ENCODE measurements at regions of chr7 and their contacts with region 1.

Region 1: GRCh38 chr7:55255496-55256435 is 109.4 kb upstream of the LANCL2 start:
- DNase-seq: peak; percentile 96
- H3K4me3 Mint-ChIP-seq: peak overlapping the region; percentile 88
- H3K27ac Mint-ChIP-seq: peak overlapping the region; percentile 50
- H3K4me1 Mint-ChIP-seq: peaks cover 22% of the 10 kb centered on the region
- H3K27me3 Mint-ChIP-seq: peaks cover 48% of the 10 kb centered on the region
- CTCF ChIP-seq: peak; percentile 94

Region 2: DNA sequence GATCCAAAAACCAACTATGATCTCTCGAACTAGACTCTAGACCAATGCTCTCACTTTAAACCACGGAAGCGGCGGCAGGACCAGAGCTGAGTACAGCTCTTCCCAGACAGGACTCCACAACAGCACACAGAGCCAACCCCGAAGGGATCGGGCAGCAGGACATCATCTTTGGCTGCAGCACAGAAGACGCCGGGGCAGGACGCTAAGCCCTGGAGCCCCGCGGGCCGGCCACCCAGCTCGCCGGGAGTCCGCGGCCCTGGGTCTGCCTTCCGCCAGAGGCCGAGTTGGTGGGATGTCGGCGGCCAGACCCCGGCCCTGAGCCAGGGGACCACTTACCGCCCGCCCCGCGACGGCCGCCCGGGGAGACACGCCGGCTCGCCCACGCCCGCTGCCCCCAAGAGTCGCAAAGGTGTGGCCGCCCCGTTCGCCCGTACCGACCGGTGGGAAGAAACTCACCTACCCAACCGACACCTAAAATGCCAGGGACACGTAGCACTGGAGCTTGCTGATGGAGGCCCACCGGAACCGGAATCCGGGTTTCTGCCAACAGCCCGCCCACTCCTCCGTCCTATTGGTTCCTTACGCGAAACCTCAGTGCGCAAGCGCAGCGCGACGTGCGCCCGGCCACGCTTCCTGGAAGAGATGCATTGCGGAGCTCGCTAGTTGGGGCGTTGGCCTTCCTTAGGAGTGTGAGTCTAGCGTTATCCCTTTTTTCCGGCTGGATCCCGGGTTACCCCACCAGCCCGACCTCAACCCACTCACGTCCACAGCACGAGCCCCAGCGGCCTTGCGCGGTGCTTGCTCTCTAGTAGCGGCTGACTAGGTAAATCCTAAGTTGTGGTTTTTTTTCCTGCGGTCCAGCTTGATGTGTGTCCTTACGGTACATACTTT is 496.8 kb before region 1 on chr7 and contains the start of gene SEC61G:
- CTCF ChIA-PET with region 1: interaction called, 19 read pairs
- intact Hi-C with region 1: no loop called
- DNase-seq: peak; percentile 99
- H3K4me3 Mint-ChIP-seq: peak within 1 kb of the TSS; percentile 99
- H3K27ac Mint-ChIP-seq: peak within 1 kb of the TSS; percentile 99
- H3K4me1 Mint-ChIP-seq: peaks cover 23% of the 10 kb centered on the region
- H3K27me3 Mint-ChIP-seq: peaks cover 8% of the 10 kb centered on the region
- CTCF ChIP-seq: no peak
- total RNA-seq, gene SEC61G: 198 and 202 TPM in 2 replicates

Region 3: DNA sequence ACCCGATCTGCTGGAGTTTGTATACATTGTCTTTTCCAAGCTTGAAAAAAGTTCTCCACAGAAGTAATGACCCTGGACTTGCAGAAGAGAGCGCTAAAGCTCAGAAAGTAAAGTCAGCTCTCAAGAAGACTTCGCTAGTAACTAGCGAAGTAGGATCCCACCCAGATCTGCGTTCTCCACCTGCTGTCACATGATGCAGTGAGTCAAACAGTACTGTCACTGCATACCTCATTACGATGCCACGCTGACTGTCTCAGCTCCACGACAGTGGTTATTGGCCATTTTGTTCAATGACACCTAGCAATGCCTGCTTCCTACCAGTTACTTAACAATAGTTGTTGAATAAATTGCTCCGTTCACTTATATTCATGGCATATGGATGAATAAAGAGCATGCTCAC is 467.1 kb before region 1 on chr7:
- CTCF ChIA-PET with region 1: interaction called, 48 read pairs
- intact Hi-C with region 1: loop called (anchors 1 kb)
- DNase-seq: peak; percentile 66
- H3K4me3 Mint-ChIP-seq: no peak overlapping the region
- H3K27ac Mint-ChIP-seq: peak overlapping the region; percentile 79
- H3K4me1 Mint-ChIP-seq: peaks cover 64% of the 10 kb centered on the region
- H3K27me3 Mint-ChIP-seq: no peaks in the 10 kb centered on the region
- CTCF ChIP-seq: peak; percentile 88

Region 4: GRCh38 chr7:54877683-54878082 is 378.1 kb before region 1 on chr7:
- CTCF ChIA-PET with region 1: interaction called, 19 read pairs
- intact Hi-C with region 1: loop called (anchors 1 kb)
- DNase-seq: peak; percentile 43
- H3K4me3 Mint-ChIP-seq: no peak overlapping the region
- H3K27ac Mint-ChIP-seq: peak overlapping the region; percentile 13
- H3K4me1 Mint-ChIP-seq: peaks cover 57% of the 10 kb centered on the region
- H3K27me3 Mint-ChIP-seq: no peaks in the 10 kb centered on the region
- CTCF ChIP-seq: no peak

Region 5: DNA sequence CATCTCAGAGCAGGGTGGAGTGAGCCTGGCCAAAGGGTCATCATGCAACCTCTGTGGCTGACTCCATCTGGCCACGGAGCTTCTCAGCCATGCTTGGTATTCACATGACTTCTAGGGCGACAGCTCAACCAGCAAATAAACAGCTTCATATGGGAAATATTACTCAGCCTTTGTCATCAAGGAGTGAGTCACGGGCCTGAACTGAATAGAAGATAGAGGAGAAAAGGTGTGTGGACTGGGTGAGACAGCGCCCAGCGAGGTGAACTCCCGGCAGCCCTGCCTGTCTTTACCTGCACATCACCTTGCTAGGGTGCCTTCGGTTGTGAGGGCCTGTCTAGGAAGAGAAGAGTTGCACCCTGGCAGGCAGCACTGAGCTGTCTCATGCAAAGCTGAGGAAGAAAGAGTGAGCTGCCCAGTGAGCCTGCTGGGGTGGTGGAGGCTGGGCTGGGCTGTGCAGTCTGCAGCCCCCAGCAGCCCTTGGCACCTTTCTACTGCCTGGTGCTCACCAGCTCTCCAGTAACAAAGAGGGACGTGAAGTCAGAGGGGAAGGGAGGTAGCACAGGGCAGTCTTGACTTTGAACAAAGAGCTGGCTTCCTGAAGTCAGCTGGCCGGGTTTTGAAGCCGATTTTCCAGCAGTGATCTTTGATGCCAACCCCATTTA is 122.7 kb before region 1 on chr7:
- CTCF ChIA-PET with region 1: interaction called, 13 read pairs
- intact Hi-C with region 1: loop called (anchors 5 kb)
- DNase-seq: peak; percentile 89
- H3K4me3 Mint-ChIP-seq: peak overlapping the region; percentile 39
- H3K27ac Mint-ChIP-seq: peak overlapping the region; percentile 95
- H3K4me1 Mint-ChIP-seq: peaks cover 72% of the 10 kb centered on the region
- H3K27me3 Mint-ChIP-seq: no peaks in the 10 kb centered on the region
- CTCF ChIP-seq: peak; percentile 20

Measured in Calu3 (cell line).